PC-9 (cell line): ENCODE measurements at regions of chr7 and their contacts with region 1.

Region 1: GRCh38 chr7:31419505-31420055 is 79.1 kb upstream of the NEUROD6 start:
- DNase-seq: no peak
- H3K4me3 ChIP-seq: no peak overlapping the region
- H3K27ac ChIP-seq: no peak overlapping the region
- H3K4me1 ChIP-seq: peaks cover 11% of the 10 kb centered on the region; the same call in 1 of the 2 replicates
- H3K27me3 ChIP-seq: no peaks in the 10 kb centered on the region; the same call in 1 of the 2 replicates
- CTCF ChIP-seq: no peak

Region 2: DNA sequence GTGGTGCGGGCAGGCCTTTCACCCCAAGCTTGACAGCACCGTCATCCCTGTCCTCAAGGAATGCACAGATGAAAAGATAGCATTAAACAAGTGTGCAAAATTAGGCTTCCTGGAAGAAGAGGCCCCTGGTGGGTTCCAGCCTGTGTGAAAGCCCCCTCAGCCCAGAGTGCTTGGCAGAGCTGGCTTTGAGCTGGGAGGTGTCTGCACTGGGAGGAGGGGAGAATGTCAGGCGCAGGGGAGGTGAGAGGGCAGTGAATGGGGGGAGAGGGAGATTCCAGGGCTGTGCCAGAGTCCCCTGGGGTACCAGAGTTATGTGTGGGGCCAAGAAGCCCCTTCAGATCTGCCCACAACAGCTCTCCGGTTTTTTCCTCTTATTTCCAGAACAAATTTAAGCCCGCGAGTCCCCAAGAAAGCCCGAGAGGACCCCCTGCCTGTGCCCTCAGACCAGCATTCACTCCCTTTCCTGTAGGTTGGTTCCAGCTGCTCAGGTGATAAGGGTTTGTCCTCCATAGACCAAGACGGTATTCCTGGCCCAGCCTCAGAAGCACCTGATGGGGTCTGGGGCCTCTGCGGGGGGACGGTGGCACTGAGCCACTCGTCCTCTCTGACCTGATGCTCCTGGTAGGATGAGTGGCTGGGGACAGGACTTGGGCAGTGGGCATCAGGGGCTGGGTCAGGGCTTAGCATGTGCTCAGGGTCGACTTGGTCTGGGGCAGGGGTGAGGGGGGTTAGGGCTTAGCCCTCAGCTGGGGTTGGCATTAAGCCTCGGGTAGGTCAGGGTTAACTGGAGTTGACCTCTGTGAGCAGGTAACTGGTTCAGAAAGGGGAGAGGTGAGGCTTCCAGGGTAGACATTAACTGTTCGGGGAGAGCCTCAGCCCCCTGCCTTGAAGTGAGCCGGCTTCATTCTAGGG is 324.0 kb before region 1 on chr7:
- CTCF ChIA-PET with region 1: no interaction called
- POLR2A ChIA-PET with region 1: no interaction called
- intact Hi-C with region 1: no loop called
- DNase-seq: no peak
- H3K4me3 ChIP-seq: no peak overlapping the region
- H3K27ac ChIP-seq: no peak overlapping the region
- H3K4me1 ChIP-seq: no peaks in the 10 kb centered on the region
- H3K27me3 ChIP-seq: peaks cover 93% of the 10 kb centered on the region
- CTCF ChIP-seq: no peak

Region 3: DNA sequence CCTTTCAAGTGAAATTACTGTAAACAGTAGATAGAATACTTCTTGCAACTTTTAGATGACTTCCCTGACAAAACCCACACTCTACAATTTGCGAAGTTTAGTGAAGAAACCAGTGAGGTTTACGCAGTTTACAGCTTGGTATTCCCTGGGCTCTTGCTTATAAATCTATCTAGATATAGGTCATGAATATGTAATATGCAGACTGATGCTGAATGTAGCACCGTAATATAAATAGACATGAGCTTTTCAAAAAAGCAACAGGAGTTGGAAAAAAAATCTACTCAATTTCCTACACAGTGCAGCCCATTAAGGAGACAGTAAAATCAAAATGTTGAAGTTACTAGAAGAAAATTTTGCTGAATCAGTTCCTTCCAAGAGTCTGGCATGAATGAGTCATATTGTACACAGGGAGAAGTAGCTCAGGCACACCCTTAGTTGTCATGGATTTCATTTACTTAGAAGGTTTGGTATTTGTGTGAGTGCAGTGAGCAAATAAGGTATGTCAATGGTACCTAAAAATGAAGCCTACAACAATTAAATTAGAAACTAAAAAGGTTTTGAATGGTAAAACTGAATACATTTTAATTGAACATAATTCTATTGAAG is 11.3 kb before region 1 on chr7:
- CTCF ChIA-PET with region 1: interaction called, 9 read pairs
- POLR2A ChIA-PET with region 1: interaction called, 24 read pairs
- intact Hi-C with region 1: loop called (anchors 1 kb)
- DNase-seq: peak; percentile 14 to 84
- H3K4me3 ChIP-seq: no peak overlapping the region
- H3K27ac ChIP-seq: peak overlapping the region; percentile 14
- H3K4me1 ChIP-seq: peaks cover 35% of the 10 kb centered on the region
- H3K27me3 ChIP-seq: no peaks in the 10 kb centered on the region
- CTCF ChIP-seq: no peak

Region 4: DNA sequence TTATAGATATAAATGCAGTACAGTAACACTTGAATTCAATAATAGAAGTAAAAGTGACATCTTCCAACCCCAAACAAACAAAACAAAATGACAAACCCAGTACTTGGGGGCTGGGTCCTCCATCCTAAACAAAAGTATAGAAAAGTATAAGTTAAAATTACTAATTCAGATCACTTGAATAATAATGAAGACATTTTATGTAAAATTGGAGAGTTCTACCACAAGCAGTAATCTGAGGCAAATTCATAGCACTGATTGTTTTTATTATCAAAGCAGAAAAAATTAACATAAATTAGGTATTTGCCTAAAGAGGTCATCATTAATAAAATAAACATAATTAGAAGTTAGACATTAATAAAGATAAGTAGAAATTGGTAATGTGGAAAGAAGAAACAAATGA is 175.8 kb after region 1 on chr7:
- CTCF ChIA-PET with region 1: no interaction called
- POLR2A ChIA-PET with region 1: no interaction called
- intact Hi-C with region 1: no loop called
- DNase-seq: no peak
- H3K4me3 ChIP-seq: no peak overlapping the region
- H3K27ac ChIP-seq: no peak overlapping the region
- H3K4me1 ChIP-seq: no peaks in the 10 kb centered on the region
- H3K27me3 ChIP-seq: 0 out of 2 replicates have a peak, but pooled peaks cover 12% of the 10 kb centered on the region
- CTCF ChIP-seq: no peak